GM10248 (cell line): ENCODE measurements at regions of chr3 and their contacts with region 1.

Region 1: GRCh38 chr3:15205934-15206661 is at the start of gene CAPN7:
- DNase-seq: peak; percentile 97
- CTCF ChIP-seq: peak; percentile 39

Region 2: DNA sequence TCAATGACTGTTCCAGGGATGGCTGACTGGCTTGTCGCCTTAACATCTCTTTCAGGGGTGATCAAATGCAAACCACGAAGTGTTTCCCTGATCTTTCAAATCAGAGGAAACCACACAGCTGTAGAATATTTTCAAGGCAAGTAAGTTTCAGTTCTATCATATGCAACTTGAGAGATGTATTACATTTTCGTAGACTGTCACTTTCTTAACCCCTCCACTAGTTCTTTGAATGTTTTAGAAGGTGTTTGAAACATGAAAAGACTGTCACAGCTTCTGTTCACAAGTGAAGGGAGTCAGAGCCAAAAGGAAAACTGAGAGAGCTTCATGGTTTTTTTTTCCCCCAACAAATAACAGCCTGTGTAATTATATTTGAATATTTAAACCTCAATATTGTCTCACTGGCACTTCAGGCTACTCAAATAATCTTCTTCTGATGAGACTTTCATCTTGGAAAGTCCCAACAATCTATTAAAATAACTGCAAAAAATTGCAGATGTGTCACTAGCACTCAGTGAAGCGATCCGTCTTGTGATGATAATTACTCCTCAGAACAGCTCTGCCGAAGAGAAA is 26.0 kb before region 1 on chr3:
- CTCF ChIA-PET with region 1: interaction called, 15 read pairs
- POLR2A ChIA-PET with region 1: interaction called, 5 read pairs
- DNase-seq: peak; percentile 28
- CTCF ChIP-seq: no peak

Region 3: GRCh38 chr3:15218689-15219088 is 12.6 kb after region 1 on chr3:
- CTCF ChIA-PET with region 1: interaction called, 11 read pairs
- POLR2A ChIA-PET with region 1: interaction called, 4 read pairs
- DNase-seq: no peak
- CTCF ChIP-seq: no peak

Region 4: DNA sequence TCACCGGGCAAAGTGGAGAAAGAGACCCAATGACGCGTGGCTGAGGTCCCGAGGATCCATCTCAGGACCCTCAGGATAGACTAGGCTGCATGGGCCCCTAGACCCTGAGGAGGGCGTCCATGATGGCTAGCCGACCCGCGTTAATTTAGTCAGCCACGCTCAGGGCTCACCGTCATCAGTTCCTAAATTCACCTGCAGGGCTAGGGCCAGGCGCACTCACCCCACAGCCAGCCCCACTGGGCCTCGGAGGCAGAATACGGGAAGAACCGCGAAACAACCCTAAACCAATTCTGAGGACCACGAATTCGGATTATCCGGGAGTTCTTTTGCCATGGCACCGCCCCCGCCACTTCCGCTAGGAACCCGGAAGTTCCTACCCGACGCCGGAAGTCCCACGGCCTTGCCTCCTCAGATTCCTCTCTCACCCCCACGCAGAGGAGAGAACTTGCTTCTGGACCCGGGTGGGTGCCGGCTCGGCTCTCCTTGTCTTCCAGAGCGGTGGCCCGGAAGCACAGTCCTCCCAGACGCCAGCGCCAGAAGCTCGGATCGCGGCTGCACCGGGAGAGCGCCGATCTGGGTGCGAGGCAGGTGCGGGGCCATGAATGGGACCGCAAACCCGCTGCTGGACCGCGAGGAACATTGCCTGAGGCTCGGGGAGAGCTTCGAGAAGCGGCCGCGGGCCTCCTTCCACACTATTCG is 221.2 kb after region 1 on chr3 and contains the starts of genes EAF1 and METTL6:
- CTCF ChIA-PET with region 1: interaction called, 10 read pairs
- POLR2A ChIA-PET with region 1: no interaction called
- DNase-seq: peak; percentile 92
- CTCF ChIP-seq: no peak

Region 5: DNA sequence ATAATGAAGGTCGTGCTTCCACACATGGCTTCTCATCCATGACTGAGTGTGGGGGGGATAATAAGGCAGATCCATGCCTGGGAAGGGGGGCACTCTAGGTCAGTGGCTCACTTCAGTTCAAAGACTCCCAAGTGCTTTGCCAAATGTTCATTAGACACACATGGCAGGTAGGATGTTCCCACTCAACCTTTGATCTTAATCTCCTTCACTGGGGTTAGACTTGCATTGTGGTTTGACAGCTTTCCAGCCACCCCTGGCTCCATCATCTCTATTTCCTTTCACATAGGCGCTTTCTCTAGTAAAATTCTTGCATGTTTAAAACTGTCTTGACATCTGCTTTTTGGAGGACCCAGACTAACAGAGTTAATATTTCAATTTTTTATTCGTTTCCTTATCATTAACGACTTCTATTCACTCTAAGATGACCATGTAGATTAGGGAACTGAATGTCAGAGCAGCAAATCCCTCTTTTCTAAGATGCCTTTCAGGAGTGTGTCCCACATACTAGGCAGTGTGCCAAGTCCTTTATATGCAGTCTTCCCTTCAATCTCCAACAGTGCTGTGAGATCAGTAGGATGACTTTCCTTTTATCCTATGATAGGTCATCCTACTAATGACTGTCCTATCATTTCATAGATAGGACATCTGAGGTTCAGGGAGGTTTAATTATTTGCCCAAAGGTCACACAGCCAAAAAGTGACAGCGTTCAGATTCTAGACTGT is 453.3 kb after region 1 on chr3:
- CTCF ChIA-PET with region 1: no interaction called
- POLR2A ChIA-PET with region 1: no interaction called
- DNase-seq: no peak
- CTCF ChIP-seq: no peak